Activated B cell treated with CpG ODN at 0.5 μM for 24 hours (primary cell): ENCODE measurements at regions of chr3 and their contacts with region 1.

Region 1: GRCh38 chr3:143001369-143002082 is at the start of gene U2SURP:
- DNase-seq: peak; percentile 74
- ATAC-seq: peak; percentile 93
- H3K4me3 Mint-ChIP-seq: peak within 1 kb of the TSS; percentile 99
- H3K27ac Mint-ChIP-seq: peak within 1 kb of the TSS; percentile 98
- H3K4me1 Mint-ChIP-seq: peaks cover 41% of the 10 kb centered on the region
- H3K27me3 Mint-ChIP-seq: no peaks in the 10 kb centered on the region
- CTCF ChIP-seq: no peak
- total RNA-seq, gene U2SURP: 117 and 131 TPM in 2 replicates

Region 2: DNA sequence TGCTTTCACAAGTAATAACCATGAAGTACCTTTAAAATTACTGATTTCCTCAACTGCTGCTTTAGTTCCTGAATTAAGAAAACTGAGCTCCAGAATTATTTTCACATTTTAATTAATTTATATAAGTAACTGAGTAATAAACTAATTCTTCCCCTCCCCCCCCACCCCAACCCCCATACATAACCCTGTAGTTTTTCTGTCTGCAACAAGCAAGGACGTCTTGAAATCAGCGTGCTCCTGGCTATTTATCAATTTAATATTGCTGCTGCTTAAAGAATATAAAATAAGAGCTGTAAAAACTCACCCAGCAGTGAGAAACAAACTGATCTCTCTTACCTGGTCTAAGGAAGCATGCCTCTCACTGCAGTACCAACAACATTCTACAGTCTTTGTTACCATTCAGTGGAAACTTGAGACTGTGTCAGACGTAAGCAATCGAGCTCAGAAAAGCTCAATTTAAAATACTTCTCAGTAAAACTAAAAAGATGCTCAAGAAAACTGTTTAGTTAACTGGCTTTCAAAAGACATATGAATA is 973.2 kb before region 1 on chr3:
- CTCF ChIA-PET with region 1: no interaction called
- POLR2A ChIA-PET with region 1: no interaction called
- intact Hi-C with region 1: loop called (anchors 1 kb)
- DNase-seq: no peak
- ATAC-seq: peak; percentile 87
- H3K4me3 Mint-ChIP-seq: peak overlapping the region; percentile 89
- H3K27ac Mint-ChIP-seq: peak overlapping the region; percentile 66
- H3K4me1 Mint-ChIP-seq: peaks cover 18% of the 10 kb centered on the region
- H3K27me3 Mint-ChIP-seq: no peaks in the 10 kb centered on the region
- CTCF ChIP-seq: no peak

Region 3: GRCh38 chr3:142226484-142226883 is 775.0 kb before region 1 on chr3:
- CTCF ChIA-PET with region 1: no interaction called
- POLR2A ChIA-PET with region 1: no interaction called
- intact Hi-C with region 1: loop called (anchors 5 kb)
- DNase-seq: no peak
- ATAC-seq: no peak
- H3K4me3 Mint-ChIP-seq: peak overlapping the region; percentile 38
- H3K27ac Mint-ChIP-seq: no peak overlapping the region
- H3K4me1 Mint-ChIP-seq: peaks cover 6% of the 10 kb centered on the region
- H3K27me3 Mint-ChIP-seq: no peaks in the 10 kb centered on the region
- CTCF ChIP-seq: no peak

Region 4: GRCh38 chr3:142578327-142579223 is 423.0 kb before region 1 on chr3 and contains the start of gene ATR:
- CTCF ChIA-PET with region 1: interaction called, 3 read pairs
- POLR2A ChIA-PET with region 1: interaction called, 47 read pairs
- intact Hi-C with region 1: loop called (anchors 1 kb)
- DNase-seq: peak; percentile 92
- ATAC-seq: peak; percentile 95
- H3K4me3 Mint-ChIP-seq: peak within 1 kb of the TSS; percentile 96
- H3K27ac Mint-ChIP-seq: peak within 1 kb of the TSS; percentile 97
- H3K4me1 Mint-ChIP-seq: peaks cover 48% of the 10 kb centered on the region
- H3K27me3 Mint-ChIP-seq: peaks cover 5% of the 10 kb centered on the region
- CTCF ChIP-seq: no peak
- total RNA-seq, gene ATR: 47.4 and 47.6 TPM in 2 replicates

Region 5: GRCh38 chr3:142618917-142619461 is 382.5 kb before region 1 on chr3:
- CTCF ChIA-PET with region 1: no interaction called
- POLR2A ChIA-PET with region 1: no interaction called
- intact Hi-C with region 1: no loop called
- DNase-seq: no peak
- ATAC-seq: no peak
- H3K4me3 Mint-ChIP-seq: no peak overlapping the region
- H3K27ac Mint-ChIP-seq: no peak overlapping the region
- H3K4me1 Mint-ChIP-seq: no peaks in the 10 kb centered on the region
- H3K27me3 Mint-ChIP-seq: no peaks in the 10 kb centered on the region
- CTCF ChIP-seq: no peak

Region 6: GRCh38 chr3:142723968-142724681 is 277.4 kb before region 1 on chr3 and contains the start of gene TRPC1:
- CTCF ChIA-PET with region 1: no interaction called
- POLR2A ChIA-PET with region 1: interaction called, 8 read pairs
- intact Hi-C with region 1: loop called (anchors 1 kb)
- DNase-seq: peak; percentile 54
- ATAC-seq: peak; percentile 95
- H3K4me3 Mint-ChIP-seq: peak within 1 kb of the TSS; percentile 87
- H3K27ac Mint-ChIP-seq: peak within 1 kb of the TSS; percentile 76
- H3K4me1 Mint-ChIP-seq: peaks cover 5% of the 10 kb centered on the region
- H3K27me3 Mint-ChIP-seq: peaks cover 22% of the 10 kb centered on the region
- CTCF ChIP-seq: no peak
- total RNA-seq, gene TRPC1: 1.2 and 1.3 TPM in 2 replicates

Region 7: GRCh38 chr3:142808103-142808917 is 193.2 kb before region 1 on chr3:
- CTCF ChIA-PET with region 1: no interaction called
- POLR2A ChIA-PET with region 1: no interaction called
- intact Hi-C with region 1: no loop called
- DNase-seq: no peak
- ATAC-seq: no peak
- H3K4me3 Mint-ChIP-seq: no peak overlapping the region
- H3K27ac Mint-ChIP-seq: no peak overlapping the region
- H3K4me1 Mint-ChIP-seq: no peaks in the 10 kb centered on the region
- H3K27me3 Mint-ChIP-seq: peaks cover 4% of the 10 kb centered on the region
- CTCF ChIP-seq: no peak

Region 8: DNA sequence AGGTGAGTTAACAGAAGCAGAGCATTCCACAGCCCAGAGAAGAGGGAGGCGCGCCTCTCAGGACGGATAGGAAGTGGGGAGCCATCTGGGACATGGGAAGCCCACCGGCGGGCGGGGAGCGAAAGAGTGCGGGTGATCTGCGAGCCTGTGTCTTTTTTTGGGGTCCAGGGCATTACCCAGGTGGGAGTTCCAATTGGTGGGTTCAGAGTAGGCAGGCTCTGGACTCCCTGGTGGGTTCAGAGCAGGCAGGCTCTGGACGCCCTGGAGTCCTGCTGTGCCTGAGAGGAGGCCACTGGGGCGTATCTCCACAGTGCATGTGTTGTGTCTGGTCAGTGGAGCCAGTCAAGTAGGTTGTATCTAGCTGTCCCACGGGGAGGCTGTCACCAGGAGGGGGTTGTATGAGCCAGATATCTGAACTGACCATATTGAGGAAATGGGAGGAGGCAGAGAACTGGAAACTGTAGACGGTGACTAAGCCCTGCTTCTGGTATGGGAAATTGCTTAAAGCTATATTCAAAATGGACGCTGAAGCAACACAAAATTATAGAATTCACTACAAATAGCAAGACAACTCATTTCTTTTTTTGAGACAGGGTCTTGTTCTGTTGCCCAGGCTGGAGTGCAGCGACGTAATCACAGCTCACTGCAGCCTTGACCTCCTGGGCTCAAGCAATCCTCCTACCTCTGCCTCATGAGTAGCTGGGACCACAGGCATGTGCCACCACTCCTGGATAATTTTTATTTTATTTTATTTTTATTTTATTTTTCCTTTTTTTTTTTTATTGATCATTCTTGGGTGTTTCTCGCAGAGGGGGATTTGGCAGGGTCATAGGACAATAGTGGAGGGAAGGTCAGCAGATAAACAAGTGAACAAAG is 83.6 kb after region 1 on chr3:
- CTCF ChIA-PET with region 1: no interaction called
- POLR2A ChIA-PET with region 1: no interaction called
- intact Hi-C with region 1: loop called (anchors 1 kb)
- DNase-seq: peak; percentile 19
- ATAC-seq: peak; percentile 53
- H3K4me3 Mint-ChIP-seq: no peak overlapping the region
- H3K27ac Mint-ChIP-seq: peak overlapping the region; percentile 14
- H3K4me1 Mint-ChIP-seq: peaks cover 31% of the 10 kb centered on the region
- H3K27me3 Mint-ChIP-seq: no peaks in the 10 kb centered on the region
- CTCF ChIP-seq: no peak

Region 9: GRCh38 chr3:143847787-143848631 is 846.5 kb after region 1 on chr3 and contains the start of gene SLC9A9:
- CTCF ChIA-PET with region 1: no interaction called
- POLR2A ChIA-PET with region 1: no interaction called
- intact Hi-C with region 1: loop called (anchors 10 kb)
- DNase-seq: no peak
- ATAC-seq: peak; percentile 94
- H3K4me3 Mint-ChIP-seq: peak within 1 kb of the TSS; percentile 96
- H3K27ac Mint-ChIP-seq: peak within 1 kb of the TSS; percentile 91
- H3K4me1 Mint-ChIP-seq: peaks cover 50% of the 10 kb centered on the region
- H3K27me3 Mint-ChIP-seq: no peaks in the 10 kb centered on the region
- CTCF ChIP-seq: no peak
- total RNA-seq, gene SLC9A9: 9.0 and 9.4 TPM in 2 replicates